Esophagus muscularis mucosa (tissue), 4 donors: ENCODE measurements at regions of chr17 and their contacts with region 1.

Region 1: GRCh38 chr17:879549-880442 is 97.6 kb downstream of the MRM3 start:
- DNase-seq: no peak
- H3K4me3 ChIP-seq: no peak overlapping the region
- H3K27ac ChIP-seq: peak overlapping the region; percentile 72 to 84 (median 82)
- H3K4me1 ChIP-seq: peaks cover 51 to 67% (median 61%) of the 10 kb centered on the region in 4 donors
- H3K27me3 ChIP-seq: no peaks in the 10 kb centered on the region
- CTCF ChIP-seq: peak; percentile 53 to 62 (median 57)
- EP300 ChIP-seq: no peak
- POLR2A ChIP-seq: no peak

Region 2: GRCh38 chr17:979538-980405 is 100.0 kb after region 1 on chr17 and contains the start of gene NXN:
- intact Hi-C with region 1: loop called (anchors 5 kb)
- DNase-seq: peak; percentile 96
- H3K4me3 ChIP-seq: peak within 1 kb of the TSS; percentile 72 to 93 (median 81)
- H3K27ac ChIP-seq: peak within 1 kb of the TSS; percentile 84 to 94 (median 92)
- H3K4me1 ChIP-seq: peaks cover 24 to 57% (median 55%) of the 10 kb centered on the region in 4 donors
- H3K27me3 ChIP-seq: no peaks in the 10 kb centered on the region
- CTCF ChIP-seq: peak in 2 of 3 experiments; percentile 24 to 38
- EP300 ChIP-seq: no peak
- POLR2A ChIP-seq: peak; percentile 53
- total RNA-seq, gene NXN: 37.0 to 65.6 (median 49.8) TPM

Region 3: GRCh38 chr17:992933-993332 is 113.1 kb after region 1 on chr17:
- intact Hi-C with region 1: no loop called
- DNase-seq: no peak
- H3K4me3 ChIP-seq: no peak overlapping the region
- H3K27ac ChIP-seq: no peak overlapping the region
- H3K4me1 ChIP-seq: peaks cover 2 to 14% (median 12%) of the 10 kb centered on the region in 4 donors
- H3K27me3 ChIP-seq: no peaks in the 10 kb centered on the region
- CTCF ChIP-seq: no peak
- EP300 ChIP-seq: no peak
- POLR2A ChIP-seq: no peak

Region 4: GRCh38 chr17:1122533-1123392 is 243.0 kb after region 1 on chr17:
- intact Hi-C with region 1: no loop called
- DNase-seq: peak; percentile 97
- H3K4me3 ChIP-seq: no peak overlapping the region
- H3K27ac ChIP-seq: peak overlapping the region; percentile 47 to 62 (median 56)
- H3K4me1 ChIP-seq: peaks cover 25 to 41% (median 28%) of the 10 kb centered on the region in 4 donors
- H3K27me3 ChIP-seq: no peaks in the 10 kb centered on the region
- CTCF ChIP-seq: peak; percentile 86 to 99 (median 97)
- EP300 ChIP-seq: no peak
- POLR2A ChIP-seq: no peak